ENCODE measurements at regions of chr12 and their contacts with region 1.

Region 1: GRCh38 chr12:44875954-44876553 is at the start of gene NELL2:
- DNase-seq: peak; percentile 81
- ATAC-seq: peak; percentile 83
- H3K4me3 Mint-ChIP-seq: peak within 1 kb of the TSS; percentile 98
- H3K27ac Mint-ChIP-seq: peak within 1 kb of the TSS; percentile 96
- H3K4me1 Mint-ChIP-seq: peaks cover 18% of the 10 kb centered on the region
- H3K27me3 Mint-ChIP-seq: no peaks in the 10 kb centered on the region
- CTCF ChIP-seq: no peak
- total RNA-seq, gene NELL2: 99.7 to 106 TPM

Region 2: GRCh38 chr12:44774815-44775411 is 101.1 kb before region 1 on chr12:
- CTCF ChIA-PET with region 1: interaction called, 76 read pairs
- POLR2A ChIA-PET with region 1: interaction called, 4 read pairs
- intact Hi-C with region 1: loop called (anchors 5 kb)
- DNase-seq: peak; percentile 74
- ATAC-seq: peak; percentile 53
- H3K4me3 Mint-ChIP-seq: no peak overlapping the region
- H3K27ac Mint-ChIP-seq: no peak overlapping the region
- H3K4me1 Mint-ChIP-seq: peaks cover 6% of the 10 kb centered on the region
- H3K27me3 Mint-ChIP-seq: no peaks in the 10 kb centered on the region
- CTCF ChIP-seq: peak; percentile 89

Region 3: GRCh38 chr12:44812062-44812461 is 64.0 kb before region 1 on chr12:
- CTCF ChIA-PET with region 1: interaction called, 172 read pairs
- POLR2A ChIA-PET with region 1: interaction called, 11 read pairs
- intact Hi-C with region 1: loop called (anchors 2 kb)
- DNase-seq: peak; percentile 71
- ATAC-seq: peak; percentile 80
- H3K4me3 Mint-ChIP-seq: no peak overlapping the region
- H3K27ac Mint-ChIP-seq: peak overlapping the region; percentile 62
- H3K4me1 Mint-ChIP-seq: peaks cover 61% of the 10 kb centered on the region
- H3K27me3 Mint-ChIP-seq: no peaks in the 10 kb centered on the region
- CTCF ChIP-seq: peak; percentile 67

Region 4: DNA sequence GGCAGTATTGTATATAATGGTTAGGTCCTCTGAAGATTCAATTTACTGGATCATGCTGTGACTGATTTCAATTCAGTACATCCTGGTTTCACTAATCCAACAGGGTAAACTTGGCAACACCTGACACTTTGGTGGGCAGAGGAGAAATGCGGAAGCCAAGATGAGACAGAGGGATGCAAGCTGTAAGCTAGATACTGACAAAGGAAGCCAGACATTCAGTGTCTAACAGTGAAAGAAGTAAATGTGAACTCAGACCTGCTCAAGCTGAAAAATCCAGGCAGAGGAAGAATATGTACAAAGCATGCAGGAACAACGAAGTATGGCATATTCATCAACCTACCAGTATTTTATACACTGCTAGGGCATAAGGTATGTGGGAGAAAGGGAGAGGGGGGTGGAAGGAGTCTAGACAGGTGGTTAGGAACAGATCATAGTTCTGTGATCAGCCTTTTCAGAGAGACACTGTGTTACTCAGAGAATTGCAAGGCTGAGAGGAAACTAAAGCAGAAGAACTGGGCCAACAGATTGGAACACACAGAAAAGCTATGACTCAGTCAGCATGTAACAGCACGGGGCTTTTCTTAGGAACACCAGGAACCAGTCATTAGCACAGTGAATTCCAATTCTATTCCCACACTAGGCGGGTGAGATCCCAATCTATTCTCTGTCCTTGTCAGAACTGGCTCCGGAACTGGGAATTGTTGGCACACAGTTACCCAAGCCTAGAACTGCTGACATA is 40.2 kb before region 1 on chr12:
- CTCF ChIA-PET with region 1: interaction called, 18 read pairs
- POLR2A ChIA-PET with region 1: interaction called, 31 read pairs
- intact Hi-C with region 1: loop called (anchors 5 kb)
- DNase-seq: peak; percentile 49
- ATAC-seq: peak; percentile 80
- H3K4me3 Mint-ChIP-seq: peak overlapping the region; percentile 63
- H3K27ac Mint-ChIP-seq: peak overlapping the region; percentile 95
- H3K4me1 Mint-ChIP-seq: peaks cover 96% of the 10 kb centered on the region
- H3K27me3 Mint-ChIP-seq: no peaks in the 10 kb centered on the region
- CTCF ChIP-seq: no peak

Region 5: GRCh38 chr12:44847888-44848702 is 28.0 kb before region 1 on chr12:
- CTCF ChIA-PET with region 1: interaction called, 12 read pairs
- POLR2A ChIA-PET with region 1: interaction called, 31 read pairs
- intact Hi-C with region 1: no loop called
- DNase-seq: peak; percentile 88
- ATAC-seq: peak; percentile 77
- H3K4me3 Mint-ChIP-seq: peak overlapping the region; percentile 60
- H3K27ac Mint-ChIP-seq: peak overlapping the region; percentile 96
- H3K4me1 Mint-ChIP-seq: peaks cover 74% of the 10 kb centered on the region
- H3K27me3 Mint-ChIP-seq: no peaks in the 10 kb centered on the region
- CTCF ChIP-seq: no peak

Region 6: DNA sequence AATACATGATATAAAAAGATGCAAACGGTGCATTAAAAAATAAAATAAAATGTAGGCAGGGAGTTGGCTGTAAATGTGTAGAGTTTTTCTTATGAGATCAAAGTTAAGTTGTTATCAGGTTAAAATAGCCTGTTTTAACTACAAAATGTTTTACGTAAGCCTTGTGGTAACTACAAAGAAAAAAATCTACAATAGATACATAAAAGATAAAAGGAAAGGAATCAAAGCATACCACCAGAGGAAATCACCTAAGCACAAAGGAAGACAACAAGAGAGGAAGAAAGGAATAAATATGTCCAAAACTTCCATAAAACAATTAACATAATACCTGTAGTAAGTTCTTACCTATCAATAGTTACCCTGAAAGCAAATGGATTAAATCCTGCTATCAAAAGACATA is 12.2 kb before region 1 on chr12:
- CTCF ChIA-PET with region 1: interaction called, 35 read pairs
- POLR2A ChIA-PET with region 1: interaction called, 5 read pairs
- intact Hi-C with region 1: no loop called
- DNase-seq: no peak
- ATAC-seq: no peak
- H3K4me3 Mint-ChIP-seq: no peak overlapping the region
- H3K27ac Mint-ChIP-seq: peak overlapping the region; percentile 47
- H3K4me1 Mint-ChIP-seq: peaks cover 62% of the 10 kb centered on the region
- H3K27me3 Mint-ChIP-seq: no peaks in the 10 kb centered on the region
- CTCF ChIP-seq: no peak

Measured in activated CD8-positive, alpha-beta T cell treated with anti-CD3 and anti-CD28 coated beads for 36 hours (primary cell).